Adrenal gland (tissue), 19 donors: ENCODE measurements at regions of chr3 and their contacts with region 1.

Region 1: DNA sequence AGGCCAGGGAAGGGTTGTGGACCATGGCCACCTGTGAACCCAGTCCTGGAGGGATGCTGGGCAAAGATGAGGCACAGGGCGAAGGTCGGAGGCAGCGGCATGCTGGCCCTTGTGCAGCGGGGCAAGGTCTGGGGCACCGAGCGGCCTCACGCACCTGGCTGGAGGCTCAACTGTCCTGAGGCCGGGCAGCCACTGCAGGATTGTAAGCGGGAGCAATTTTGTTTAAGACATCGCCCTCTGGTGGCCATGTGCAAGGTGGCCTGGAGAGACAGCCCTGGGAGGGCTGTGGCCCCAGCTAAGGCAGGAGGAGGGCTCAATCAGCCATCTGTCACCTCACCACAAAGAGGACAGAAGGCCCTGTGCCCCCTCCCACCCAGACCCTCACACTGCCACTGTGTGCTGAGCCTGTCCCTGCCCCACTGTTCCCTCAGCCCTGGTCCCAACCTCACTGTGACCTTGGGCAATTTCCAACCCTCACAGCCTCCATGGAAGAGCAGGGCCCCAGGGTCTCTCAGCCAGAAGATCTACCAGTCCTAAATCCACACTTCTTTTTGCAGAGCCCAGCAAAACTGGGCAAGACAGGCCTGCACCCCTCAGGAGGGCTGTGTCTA is 46.2 kb downstream of the TPRA1 start:
- DNase-seq: peak; percentile 65 to 90 (median 81)
- H3K4me3 ChIP-seq: no peak overlapping the region
- H3K27ac ChIP-seq: no peak overlapping the region
- H3K4me1 ChIP-seq: peaks cover 4 to 11% of the 10 kb centered on the region in 2 donors
- H3K27me3 ChIP-seq: no peaks in the 10 kb centered on the region
- CTCF ChIP-seq: peak; percentile 62 to 83 (median 73)
- POLR2A ChIP-seq: no peak

Region 2: GRCh38 chr3:126752303-126752842 is 791.9 kb before region 1 on chr3:
- intact Hi-C with region 1: loop called in 1 of 2 experiments (anchors 5 kb)
- DNase-seq: peak; percentile 73 to 91 (median 77)
- H3K4me3 ChIP-seq: no peak overlapping the region
- H3K27ac ChIP-seq: no peak overlapping the region
- H3K4me1 ChIP-seq: peaks cover 0 to 6% of the 10 kb centered on the region in 2 donors
- H3K27me3 ChIP-seq: no peaks in the 10 kb centered on the region
- CTCF ChIP-seq: peak; percentile 78 to 92 (median 88)
- POLR2A ChIP-seq: no peak